AG04450 (cell line): ENCODE measurements at regions of chr2 and their contacts with region 1.

Region 1: GRCh38 chr2:50084086-50084843 is 930.0 kb upstream of the FSHR start:
- DNase-seq: no peak
- H3K4me3 ChIP-seq: no peak overlapping the region
- H3K27ac ChIP-seq: no peak overlapping the region
- H3K27me3 ChIP-seq: no peaks in the 10 kb centered on the region
- CTCF ChIP-seq: no peak

Region 2: GRCh38 chr2:49943944-49944778 is 140.1 kb before region 1 on chr2:
- CTCF ChIA-PET with region 1: no interaction called
- POLR2A ChIA-PET with region 1: no interaction called
- DNase-seq: no peak
- H3K4me3 ChIP-seq: no peak overlapping the region
- H3K27ac ChIP-seq: no peak overlapping the region
- H3K27me3 ChIP-seq: no peaks in the 10 kb centered on the region
- CTCF ChIP-seq: no peak

Region 3: GRCh38 chr2:50066873-50067272 is 17.4 kb before region 1 on chr2:
- CTCF ChIA-PET with region 1: interaction called, 10 read pairs
- POLR2A ChIA-PET with region 1: no interaction called
- DNase-seq: no peak
- H3K4me3 ChIP-seq: no peak overlapping the region
- H3K27ac ChIP-seq: no peak overlapping the region
- H3K27me3 ChIP-seq: no peaks in the 10 kb centered on the region
- CTCF ChIP-seq: no peak